AG04450 (cell line): ENCODE measurements at regions of chr5 and their contacts with region 1.

Region 1: DNA sequence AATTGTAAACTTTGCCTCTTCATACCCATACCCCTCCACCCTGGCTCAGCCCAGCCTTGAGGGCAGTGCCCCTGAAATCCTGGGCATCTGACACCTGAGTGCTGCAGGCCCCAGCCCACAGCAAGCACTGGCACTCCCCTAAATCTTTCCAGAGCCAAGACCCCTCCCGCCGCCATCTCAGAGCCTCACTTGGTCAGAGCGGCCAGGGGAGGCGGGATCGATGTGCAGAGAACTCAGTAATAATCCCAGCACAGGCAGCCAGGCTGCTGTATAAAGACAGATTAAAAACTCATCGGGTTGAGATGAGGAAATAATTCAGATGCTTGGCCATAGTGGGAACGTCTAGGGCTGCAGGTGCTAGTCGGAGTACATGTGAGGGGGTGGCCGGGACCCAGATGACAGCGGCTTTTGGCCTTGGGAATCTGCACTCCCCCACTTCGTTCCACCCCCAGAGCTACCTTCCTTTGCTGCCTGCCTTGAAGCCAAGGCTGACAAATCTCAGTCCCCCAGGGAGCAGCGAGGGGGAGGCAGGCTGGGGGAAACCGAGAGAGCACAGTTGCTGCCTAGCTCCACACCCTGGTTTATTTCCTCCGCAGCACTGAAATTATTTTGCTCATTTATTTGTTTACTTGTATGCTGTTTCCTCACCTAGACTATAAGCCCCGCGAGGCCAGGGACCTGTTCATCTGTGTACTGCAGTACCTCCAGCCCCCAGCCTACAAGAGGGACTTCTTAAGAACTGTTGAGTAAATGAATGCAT is 19.5 kb upstream of the ARAP3 start:
- DNase-seq: no peak
- H3K4me3 ChIP-seq: no peak overlapping the region
- H3K27ac ChIP-seq: no peak overlapping the region
- H3K27me3 ChIP-seq: peaks cover 91% of the 10 kb centered on the region
- CTCF ChIP-seq: no peak

Region 2: DNA sequence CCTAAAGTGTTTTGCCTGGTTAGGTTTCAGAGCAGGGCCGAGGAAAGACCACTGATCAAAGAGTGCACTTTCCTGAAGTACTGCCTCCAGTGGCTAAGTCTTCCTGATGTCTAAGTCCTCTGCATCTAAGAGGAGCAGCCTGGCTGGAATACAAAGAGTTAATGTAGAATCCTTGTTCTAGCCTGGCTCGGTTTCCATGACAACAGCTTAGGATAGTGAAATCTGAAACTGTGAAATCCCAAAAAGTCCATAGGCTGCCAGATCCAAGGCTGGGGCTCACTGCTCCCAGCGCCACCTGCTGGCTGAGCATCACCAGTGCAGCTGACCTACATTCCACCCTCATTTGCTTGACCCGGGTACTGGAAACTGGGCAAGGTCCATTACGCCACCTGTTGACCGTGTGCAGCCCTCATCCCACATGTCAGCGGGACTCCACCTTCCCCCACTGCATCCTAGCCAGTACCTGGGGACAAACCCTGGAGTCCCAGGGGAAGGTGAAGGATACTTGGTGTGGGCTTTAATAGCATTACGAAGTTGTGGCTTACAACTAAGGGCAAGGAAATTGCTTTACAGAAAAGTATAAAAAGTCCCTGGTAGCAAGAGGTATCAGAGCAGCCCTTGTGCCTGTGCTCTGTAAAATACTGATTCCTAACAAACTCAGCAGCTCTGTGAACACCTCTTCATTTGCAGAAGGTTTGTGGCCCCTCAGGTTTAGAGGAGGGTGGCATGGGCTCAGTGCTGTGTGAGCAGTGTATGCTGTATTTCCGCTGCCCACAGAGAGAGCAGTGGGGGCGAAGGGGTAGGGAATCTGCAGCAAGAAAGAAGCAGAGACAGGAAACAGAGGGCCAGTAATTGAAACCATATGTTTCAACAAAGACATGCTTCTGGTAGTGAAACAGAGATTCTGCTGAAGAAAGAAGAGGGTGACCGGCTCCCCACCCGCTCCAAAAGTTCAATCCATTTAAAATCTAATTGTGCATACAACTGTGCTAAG is 176.6 kb before region 1 on chr5:
- CTCF ChIA-PET with region 1: no interaction called
- POLR2A ChIA-PET with region 1: no interaction called
- DNase-seq: peak; percentile 95
- H3K4me3 ChIP-seq: peak overlapping the region; percentile 29
- H3K27ac ChIP-seq: peak overlapping the region; percentile 95
- H3K27me3 ChIP-seq: no peaks in the 10 kb centered on the region
- CTCF ChIP-seq: peak; percentile 99

Region 3: GRCh38 chr5:141681695-141682641 is 19.6 kb before region 1 on chr5 and contains the start of gene ARAP3:
- CTCF ChIA-PET with region 1: interaction called, 10 read pairs
- POLR2A ChIA-PET with region 1: no interaction called
- DNase-seq: peak; percentile 43
- H3K4me3 ChIP-seq: peak within 1 kb of the TSS; percentile 54
- H3K27ac ChIP-seq: peak within 1 kb of the TSS; percentile 77
- H3K27me3 ChIP-seq: no peaks in the 10 kb centered on the region
- CTCF ChIP-seq: no peak
- polyA plus RNA-seq, gene ARAP3: 3.5 and 4.9 TPM in 2 replicates

Region 4: DNA sequence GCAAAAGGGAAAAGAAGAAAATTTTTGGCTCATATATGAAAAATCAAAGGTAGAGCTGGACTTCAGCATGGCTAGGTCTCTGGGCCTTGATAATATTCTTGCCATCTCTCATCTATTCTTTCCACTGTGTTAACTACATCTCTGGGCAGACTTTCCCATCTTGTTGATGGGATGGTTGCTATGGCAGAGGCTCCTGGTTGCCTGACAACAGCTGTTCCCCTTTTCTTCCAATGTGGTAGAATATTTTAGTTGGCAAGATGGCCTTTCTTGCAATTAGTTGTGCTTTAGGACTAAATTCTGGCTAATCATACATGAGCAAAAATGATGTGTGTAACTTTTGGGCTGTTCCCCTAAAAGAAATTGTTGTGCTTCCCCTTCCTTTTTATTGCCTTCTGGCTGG is 20.7 kb after region 1 on chr5:
- CTCF ChIA-PET with region 1: no interaction called
- POLR2A ChIA-PET with region 1: no interaction called
- DNase-seq: no peak
- H3K4me3 ChIP-seq: no peak overlapping the region
- H3K27ac ChIP-seq: no peak overlapping the region
- H3K27me3 ChIP-seq: peaks cover 13% of the 10 kb centered on the region
- CTCF ChIP-seq: no peak

Region 5: GRCh38 chr5:141825791-141826560 is 124.4 kb after region 1 on chr5:
- CTCF ChIA-PET with region 1: interaction called, 13 read pairs
- POLR2A ChIA-PET with region 1: no interaction called
- DNase-seq: no peak
- H3K4me3 ChIP-seq: no peak overlapping the region
- H3K27ac ChIP-seq: no peak overlapping the region
- H3K27me3 ChIP-seq: peaks cover 32% of the 10 kb centered on the region
- CTCF ChIP-seq: peak; percentile 36

Region 6: DNA sequence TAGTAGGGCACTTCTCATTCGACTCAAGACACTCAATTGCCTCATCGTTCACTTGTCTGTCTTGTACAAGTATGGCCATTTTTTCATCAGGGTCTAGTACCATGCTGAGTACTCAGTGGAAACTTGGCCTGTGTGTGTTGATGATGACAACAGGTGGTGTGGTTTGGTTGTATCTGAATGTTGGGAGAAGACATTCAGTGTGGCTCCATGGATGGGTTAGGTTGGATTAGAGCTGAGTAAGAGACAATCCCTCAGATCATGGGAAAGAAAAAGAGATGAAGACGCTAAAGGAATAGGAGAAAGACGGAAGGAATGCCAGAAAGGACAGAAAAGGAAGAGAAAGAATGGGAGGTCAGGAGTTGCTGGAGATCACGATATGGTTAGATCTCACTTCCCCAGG is 159.7 kb after region 1 on chr5:
- CTCF ChIA-PET with region 1: interaction called, 10 read pairs
- POLR2A ChIA-PET with region 1: no interaction called
- DNase-seq: no peak
- H3K4me3 ChIP-seq: no peak overlapping the region
- H3K27ac ChIP-seq: no peak overlapping the region
- H3K27me3 ChIP-seq: peaks cover 23% of the 10 kb centered on the region
- CTCF ChIP-seq: no peak